ENCODE measurements at regions of chr10 and their contacts with region 1.

Region 1: DNA sequence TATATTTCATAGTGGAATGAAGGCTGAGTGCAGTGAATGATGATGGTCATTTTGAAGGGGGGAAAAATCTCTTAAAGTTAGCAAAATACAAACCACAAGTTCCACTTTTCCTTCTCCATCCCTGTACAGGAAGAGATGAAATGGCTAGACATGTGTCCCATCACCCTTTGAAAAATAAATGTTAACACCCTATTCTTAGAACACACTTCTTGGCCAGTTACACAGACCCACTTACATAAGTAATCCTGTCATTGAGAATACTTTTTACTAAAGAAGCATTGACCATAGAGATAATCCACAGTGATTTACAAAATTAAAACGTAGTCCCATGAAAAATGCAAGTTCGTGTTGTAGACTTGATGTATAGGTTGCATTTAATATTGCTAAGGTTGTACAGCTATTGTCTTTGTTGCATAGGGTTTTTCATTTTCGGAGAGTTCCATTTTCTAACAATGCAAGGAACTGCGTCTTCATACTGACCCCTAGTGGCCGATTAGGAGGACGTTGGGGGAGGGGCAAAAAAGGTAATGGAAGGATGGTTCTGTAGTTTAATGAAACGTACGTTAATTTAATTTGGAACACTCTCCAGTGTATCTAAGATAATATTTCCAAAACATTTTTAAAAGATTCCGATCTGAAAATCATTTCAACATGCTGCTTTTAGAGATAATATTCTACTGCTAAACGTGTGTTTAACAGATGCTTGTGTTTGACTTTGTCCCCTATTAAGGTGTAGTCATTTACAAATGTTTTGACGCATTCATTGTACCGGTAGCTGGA is 60.9 kb downstream of the ARMC3 start:
- DNase-seq: peak; percentile 81
- H3K4me3 Mint-ChIP-seq: no peak overlapping the region
- H3K27ac Mint-ChIP-seq: no peak overlapping the region
- H3K4me1 Mint-ChIP-seq: no peaks in the 10 kb centered on the region
- H3K27me3 Mint-ChIP-seq: peaks cover 9% of the 10 kb centered on the region
- CTCF ChIP-seq: peak; percentile 91

Region 2: GRCh38 chr10:21740989-21741388 is 1247.8 kb before region 1 on chr10:
- CTCF ChIA-PET with region 1: no interaction called
- POLR2A ChIA-PET with region 1: no interaction called
- intact Hi-C with region 1: loop called (anchors 5 kb)
- DNase-seq: no peak
- H3K4me3 Mint-ChIP-seq: no peak overlapping the region
- H3K27ac Mint-ChIP-seq: no peak overlapping the region
- H3K4me1 Mint-ChIP-seq: peaks cover 8% of the 10 kb centered on the region
- H3K27me3 Mint-ChIP-seq: no peaks in the 10 kb centered on the region
- CTCF ChIP-seq: no peak

Region 3: GRCh38 chr10:22259280-22259679 is 729.5 kb before region 1 on chr10:
- CTCF ChIA-PET with region 1: interaction called, 4 read pairs
- POLR2A ChIA-PET with region 1: no interaction called
- intact Hi-C with region 1: loop called (anchors 5 kb)
- DNase-seq: no peak
- H3K4me3 Mint-ChIP-seq: no peak overlapping the region
- H3K27ac Mint-ChIP-seq: no peak overlapping the region
- H3K4me1 Mint-ChIP-seq: no peaks in the 10 kb centered on the region
- H3K27me3 Mint-ChIP-seq: no peaks in the 10 kb centered on the region
- CTCF ChIP-seq: no peak

Region 4: DNA sequence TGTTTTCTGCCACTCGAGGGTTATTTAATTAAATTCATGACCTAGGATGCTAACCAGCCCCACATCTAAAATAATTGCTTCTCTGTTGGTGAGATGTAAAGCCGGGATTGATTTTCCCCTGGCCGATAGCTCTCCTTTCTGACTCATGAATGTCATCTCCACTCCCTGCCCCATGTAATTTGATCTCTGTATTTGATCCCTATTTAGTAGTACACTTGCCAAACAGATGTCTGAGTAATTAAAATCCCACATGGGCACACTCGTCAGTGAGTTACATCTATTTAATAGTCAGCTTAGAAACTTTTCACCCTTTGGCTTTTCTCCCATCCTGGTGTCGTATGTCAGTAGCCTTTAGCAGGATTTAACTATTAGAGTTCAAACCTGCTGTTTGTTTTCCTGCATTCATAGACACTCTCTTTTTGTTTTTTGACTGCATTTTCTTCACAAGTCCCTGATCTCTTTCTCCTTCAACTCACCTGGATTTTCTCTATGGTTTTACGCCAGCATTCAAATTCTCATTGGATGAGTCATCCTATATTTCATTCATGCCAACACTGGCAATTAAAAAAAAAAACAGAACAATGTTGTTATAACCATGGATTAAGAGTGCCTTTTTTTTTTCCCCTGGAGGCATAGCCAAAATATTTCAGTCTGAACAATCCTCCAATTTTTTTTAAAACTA is 560.7 kb before region 1 on chr10:
- CTCF ChIA-PET with region 1: interaction called, 5 read pairs
- POLR2A ChIA-PET with region 1: no interaction called
- intact Hi-C with region 1: loop called (anchors 5 kb)
- DNase-seq: peak; percentile 93
- H3K4me3 Mint-ChIP-seq: peak overlapping the region; percentile 49
- H3K27ac Mint-ChIP-seq: peak overlapping the region; percentile 63
- H3K4me1 Mint-ChIP-seq: peaks cover 41% of the 10 kb centered on the region
- H3K27me3 Mint-ChIP-seq: no peaks in the 10 kb centered on the region
- CTCF ChIP-seq: no peak

Region 5: GRCh38 chr10:22666287-22667092 is 322.3 kb before region 1 on chr10:
- CTCF ChIA-PET with region 1: no interaction called
- POLR2A ChIA-PET with region 1: no interaction called
- intact Hi-C with region 1: no loop called
- DNase-seq: no peak
- H3K4me3 Mint-ChIP-seq: no peak overlapping the region
- H3K27ac Mint-ChIP-seq: no peak overlapping the region
- H3K4me1 Mint-ChIP-seq: no peaks in the 10 kb centered on the region
- H3K27me3 Mint-ChIP-seq: no peaks in the 10 kb centered on the region
- CTCF ChIP-seq: no peak

Region 6: GRCh38 chr10:22714479-22715289 is 274.1 kb before region 1 on chr10 and contains the start of gene PIP4K2A:
- CTCF ChIA-PET with region 1: interaction called, 3 read pairs
- POLR2A ChIA-PET with region 1: no interaction called
- intact Hi-C with region 1: loop called (anchors 5 kb)
- DNase-seq: peak; percentile 72
- H3K4me3 Mint-ChIP-seq: peak within 1 kb of the TSS; percentile 78
- H3K27ac Mint-ChIP-seq: peak within 1 kb of the TSS; percentile 31
- H3K4me1 Mint-ChIP-seq: peaks cover 12% of the 10 kb centered on the region
- H3K27me3 Mint-ChIP-seq: no peaks in the 10 kb centered on the region
- CTCF ChIP-seq: no peak
- total RNA-seq, gene PIP4K2A: 24.2 and 27.5 TPM in 2 replicates

Region 7: DNA sequence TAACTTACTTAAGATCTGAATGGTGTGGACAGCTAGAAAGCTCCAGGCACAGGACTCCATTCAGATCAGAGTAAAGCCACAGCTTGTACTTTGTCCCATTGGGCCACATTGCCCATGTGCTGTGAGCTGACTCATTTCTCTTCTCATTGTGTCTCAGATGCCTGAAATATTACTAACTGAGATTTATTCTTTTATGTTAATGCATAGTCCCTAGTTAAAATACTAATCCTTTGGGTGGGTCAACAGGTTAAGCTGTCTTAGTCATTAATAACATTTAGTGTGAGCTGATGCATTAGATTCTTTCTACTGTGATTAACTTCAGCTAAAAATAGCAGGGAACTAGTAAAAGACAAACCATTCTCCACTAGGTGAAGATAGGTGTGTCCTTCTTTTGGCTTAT is 165.7 kb before region 1 on chr10:
- CTCF ChIA-PET with region 1: no interaction called
- POLR2A ChIA-PET with region 1: no interaction called
- intact Hi-C with region 1: no loop called
- DNase-seq: peak; percentile 70
- H3K4me3 Mint-ChIP-seq: no peak overlapping the region
- H3K27ac Mint-ChIP-seq: peak overlapping the region; percentile 19
- H3K4me1 Mint-ChIP-seq: peaks cover 15% of the 10 kb centered on the region
- H3K27me3 Mint-ChIP-seq: no peaks in the 10 kb centered on the region
- CTCF ChIP-seq: no peak

Measured in MCF 10A (cell line).